ENCODE measurements at regions of chr19 and their contacts with region 1.

Region 1: DNA sequence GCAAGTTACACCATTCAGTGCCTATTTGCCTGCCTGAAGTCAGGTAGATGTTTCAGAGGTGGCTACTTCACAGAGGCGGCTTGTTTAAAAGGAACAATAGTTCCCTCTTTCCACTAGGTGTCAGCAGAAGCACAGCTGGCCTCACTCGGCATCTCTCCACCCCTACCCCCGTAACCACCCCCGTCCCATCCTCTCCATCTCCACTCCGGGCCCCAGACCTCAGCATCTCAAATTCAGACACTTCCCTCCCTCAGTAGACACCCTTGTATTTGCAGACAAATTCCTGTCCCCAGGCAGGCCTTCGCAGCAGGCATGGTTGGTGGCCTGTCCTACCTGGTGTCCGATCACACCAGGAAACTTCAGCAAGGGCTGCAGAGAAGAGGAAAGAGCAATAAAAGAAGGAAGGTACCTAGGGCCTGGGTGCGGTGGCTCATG is 9.1 kb upstream of the DPP9 start:
- DNase-seq: no peak
- H3K4me3 ChIP-seq: peak overlapping the region in 3 of 4 donors; percentile 12 to 24 (median 18)
- H3K27ac ChIP-seq: no peak overlapping the region
- H3K4me1 ChIP-seq: peaks cover 3 to 12% (median 7%) of the 10 kb centered on the region in 4 donors
- H3K27me3 ChIP-seq: peaks cover 0 to 12% (median 0%) of the 10 kb centered on the region in 4 donors
- CTCF ChIP-seq: peak; percentile 64 to 81 (median 76)
- EP300 ChIP-seq: no peak
- POLR2A ChIP-seq: no peak

Region 2: GRCh38 chr19:4705413-4706131 is 27.1 kb before region 1 on chr19:
- intact Hi-C with region 1: no loop called
- DNase-seq: no peak
- H3K4me3 ChIP-seq: no peak overlapping the region
- H3K27ac ChIP-seq: peak overlapping the region in 3 of 4 donors; percentile 10 to 45 (median 30)
- H3K4me1 ChIP-seq: peaks cover 31 to 54% (median 42%) of the 10 kb centered on the region in 4 donors
- H3K27me3 ChIP-seq: no peaks in the 10 kb centered on the region
- CTCF ChIP-seq: no peak
- EP300 ChIP-seq: no peak
- POLR2A ChIP-seq: no peak

Region 3: GRCh38 chr19:4754248-4754647 is 21.6 kb after region 1 on chr19:
- intact Hi-C with region 1: no loop called
- DNase-seq: no peak
- H3K4me3 ChIP-seq: no peak overlapping the region
- H3K27ac ChIP-seq: no peak overlapping the region
- H3K4me1 ChIP-seq: peaks cover 0 to 2% (median 1%) of the 10 kb centered on the region in 4 donors
- H3K27me3 ChIP-seq: peaks cover 0 to 7% (median 0%) of the 10 kb centered on the region in 4 donors
- CTCF ChIP-seq: no peak
- EP300 ChIP-seq: no peak
- POLR2A ChIP-seq: no peak

Region 4: GRCh38 chr19:4791170-4792018 is 58.7 kb after region 1 on chr19 and contains the start of gene FEM1A:
- intact Hi-C with region 1: loop called (anchors 1 kb)
- DNase-seq: peak; percentile 100
- H3K4me3 ChIP-seq: peak within 1 kb of the TSS; percentile 79 to 99 (median 84)
- H3K27ac ChIP-seq: peak within 1 kb of the TSS; percentile 89 to 94 (median 92)
- H3K4me1 ChIP-seq: peaks cover 33 to 49% (median 48%) of the 10 kb centered on the region in 4 donors
- H3K27me3 ChIP-seq: no peaks in the 10 kb centered on the region
- CTCF ChIP-seq: peak; percentile 98 to 100 (median 98)
- EP300 ChIP-seq: peak; percentile 86
- POLR2A ChIP-seq: peak; percentile 56
- total RNA-seq, gene FEM1A: 16.2 to 22.8 (median 19.9) TPM

Region 5: GRCh38 chr19:4867534-4868285 is 135.0 kb after region 1 on chr19 and contains the start of gene PLIN3:
- intact Hi-C with region 1: loop called (anchors 10 kb)
- DNase-seq: peak; percentile 100
- H3K4me3 ChIP-seq: peak within 1 kb of the TSS; percentile 70 to 96 (median 74)
- H3K27ac ChIP-seq: peak within 1 kb of the TSS; percentile 78 to 90 (median 84)
- H3K4me1 ChIP-seq: peaks cover 7 to 39% (median 20%) of the 10 kb centered on the region in 4 donors
- H3K27me3 ChIP-seq: no peaks in the 10 kb centered on the region
- CTCF ChIP-seq: no peak
- EP300 ChIP-seq: no peak
- POLR2A ChIP-seq: no peak
- total RNA-seq, gene PLIN3: 15.4 to 69.0 (median 51.1) TPM

Region 6: DNA sequence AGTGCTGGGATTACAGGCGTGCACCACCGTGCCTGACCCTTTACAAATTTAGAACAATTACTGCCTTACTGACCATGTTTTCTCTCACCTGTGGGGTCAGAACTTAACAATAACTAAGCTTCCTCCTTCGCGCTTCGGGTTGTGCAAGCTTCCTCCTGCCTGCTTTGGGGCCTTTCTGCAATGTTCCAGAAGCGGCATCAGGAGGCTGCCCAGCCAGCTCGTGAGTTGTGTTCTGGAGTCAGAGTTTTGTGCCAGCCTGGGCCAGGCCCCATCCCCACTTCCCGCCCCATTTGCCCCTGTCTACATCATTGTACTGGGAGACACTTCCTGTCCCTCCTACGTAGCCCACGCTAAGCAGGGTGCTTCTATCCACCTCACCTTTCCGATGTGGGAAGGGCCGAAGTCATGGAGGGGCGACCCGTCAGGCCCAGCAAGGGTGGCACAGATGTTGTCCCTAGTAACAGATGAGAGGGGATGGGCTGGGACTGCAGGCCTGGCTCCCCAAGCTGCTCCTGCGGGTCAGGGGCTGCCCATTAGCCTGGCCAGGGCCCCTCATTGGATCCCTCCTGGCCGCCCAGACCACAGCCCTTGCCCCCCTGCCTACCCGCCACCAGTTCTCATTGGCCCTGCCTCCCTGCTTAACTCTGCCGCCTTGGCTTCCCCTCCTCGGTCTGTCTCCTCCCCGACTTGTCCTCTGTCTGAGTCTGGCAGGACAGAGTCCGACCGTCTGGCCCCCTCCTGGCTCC is 190.0 kb after region 1 on chr19:
- intact Hi-C with region 1: no loop called
- DNase-seq: no peak
- H3K4me3 ChIP-seq: no peak overlapping the region
- H3K27ac ChIP-seq: no peak overlapping the region
- H3K4me1 ChIP-seq: no peaks in the 10 kb centered on the region
- H3K27me3 ChIP-seq: no peaks in the 10 kb centered on the region
- CTCF ChIP-seq: no peak
- EP300 ChIP-seq: no peak
- POLR2A ChIP-seq: no peak